ENCODE measurements at regions of chr11 and their contacts with region 1.

Region 1: GRCh38 chr11:14373931-14374646 is 15.1 kb upstream of the RRAS2 start:
- DNase-seq: no peak
- H3K4me3 Mint-ChIP-seq: no peak overlapping the region
- H3K27ac Mint-ChIP-seq: no peak overlapping the region
- H3K4me1 Mint-ChIP-seq: peaks cover 52% of the 10 kb centered on the region
- H3K27me3 Mint-ChIP-seq: peaks cover 7% of the 10 kb centered on the region

Region 2: DNA sequence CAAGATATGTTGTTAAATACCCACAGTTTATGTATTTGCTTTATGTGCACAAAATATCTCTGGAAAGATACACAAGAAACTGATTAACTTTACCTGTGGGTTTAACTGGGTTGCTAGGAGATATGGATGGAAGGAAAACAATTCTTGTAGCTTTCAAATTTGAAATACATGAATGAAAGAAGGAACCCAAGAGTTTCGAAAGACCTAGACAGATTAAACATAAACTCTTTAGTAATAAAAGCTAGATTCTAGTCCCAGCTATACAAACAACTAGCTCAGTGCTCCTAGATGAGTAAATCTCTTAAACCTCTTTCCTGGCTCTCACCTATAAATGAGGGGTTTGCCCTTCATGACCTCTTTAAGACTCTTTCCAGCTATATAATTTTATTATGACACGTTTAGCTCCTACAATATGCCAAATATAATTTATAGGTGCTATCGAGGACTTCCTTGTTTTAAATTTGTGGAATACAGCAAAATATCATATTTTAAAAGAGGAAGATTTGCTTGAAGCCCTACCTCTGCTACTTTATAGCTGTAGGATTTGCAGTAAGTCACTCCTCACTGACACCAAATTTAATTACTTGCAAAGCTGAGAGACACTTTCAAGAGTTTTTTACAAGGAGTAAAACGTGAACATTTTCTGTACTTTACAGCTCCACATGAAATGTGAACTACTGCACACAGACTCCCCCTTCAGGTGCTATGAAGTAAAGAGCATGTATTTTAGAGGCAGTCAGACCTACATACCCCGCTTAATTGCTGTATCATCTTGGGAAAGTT is 65.8 kb before region 1 on chr11:
- CTCF ChIA-PET with region 1: interaction called, 5 read pairs
- intact Hi-C with region 1: loop called (anchors 2 kb)
- DNase-seq: no peak
- H3K4me3 Mint-ChIP-seq: no peak overlapping the region
- H3K27ac Mint-ChIP-seq: no peak overlapping the region
- H3K4me1 Mint-ChIP-seq: peaks cover 19% of the 10 kb centered on the region
- H3K27me3 Mint-ChIP-seq: no peaks in the 10 kb centered on the region

Region 3: GRCh38 chr11:14336507-14337503 is 37.3 kb before region 1 on chr11:
- CTCF ChIA-PET with region 1: no interaction called
- intact Hi-C with region 1: loop called (anchors 2 kb)
- DNase-seq: peak; percentile 32
- H3K4me3 Mint-ChIP-seq: peak overlapping the region; percentile 16
- H3K27ac Mint-ChIP-seq: peak overlapping the region; percentile 76
- H3K4me1 Mint-ChIP-seq: peaks cover 52% of the 10 kb centered on the region
- H3K27me3 Mint-ChIP-seq: no peaks in the 10 kb centered on the region

Region 4: DNA sequence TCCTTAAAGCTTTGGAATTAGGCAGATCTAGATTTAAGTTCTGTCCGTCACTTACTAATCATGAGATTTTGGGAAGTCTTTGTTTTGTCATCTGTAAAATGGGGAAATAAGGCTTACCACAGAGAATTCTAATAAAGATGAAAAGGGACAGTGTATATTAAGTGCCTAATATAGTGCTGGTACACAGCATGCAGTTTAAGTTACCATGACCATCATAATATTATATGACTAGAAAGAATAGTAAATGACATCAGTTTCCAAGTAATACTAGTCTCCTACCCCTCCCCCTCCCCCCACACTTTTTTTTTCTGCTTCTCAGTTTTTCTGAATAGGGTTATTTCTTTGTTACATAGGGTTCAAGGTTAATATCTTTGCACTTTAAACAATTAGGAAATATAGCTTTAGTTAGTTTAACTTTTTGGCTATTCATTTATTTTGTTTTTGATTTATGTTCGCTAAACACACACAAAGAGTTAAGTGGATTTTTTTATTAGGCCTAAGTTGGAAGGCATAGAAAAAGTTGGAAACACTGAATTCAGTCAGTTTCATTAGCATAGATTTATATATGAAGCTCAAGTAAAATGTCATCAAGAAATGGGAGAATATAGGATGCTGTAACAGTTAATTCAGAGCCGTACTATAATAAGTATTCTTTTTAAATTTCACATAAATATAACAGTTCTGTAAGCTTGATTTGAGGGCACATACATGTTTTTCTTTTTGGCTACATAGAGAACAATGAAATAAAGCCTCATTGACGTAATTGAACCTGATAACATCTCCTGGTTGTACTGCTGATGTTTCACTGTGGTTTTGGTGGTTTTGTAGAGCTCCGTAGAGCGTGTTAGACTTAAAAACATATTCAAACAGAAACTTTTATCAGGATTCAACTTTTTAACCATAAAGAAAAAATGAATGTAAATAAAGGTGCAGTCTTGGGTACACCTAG is 390.8 kb after region 1 on chr11:
- CTCF ChIA-PET with region 1: no interaction called
- intact Hi-C with region 1: loop called (anchors 10 kb)
- DNase-seq: peak; percentile 58
- H3K4me3 Mint-ChIP-seq: peak overlapping the region; percentile 41
- H3K27ac Mint-ChIP-seq: no peak overlapping the region
- H3K4me1 Mint-ChIP-seq: peaks cover 45% of the 10 kb centered on the region
- H3K27me3 Mint-ChIP-seq: no peaks in the 10 kb centered on the region

Measured in activated naive CD4-positive, alpha-beta T cell treated with anti-CD3 and anti-CD28 coated beads for 36 hours (primary cell).